ENCODE measurements at regions of chr2 and their contacts with region 1.

Region 1: GRCh38 chr2:38581193-38582147 is 21.3 kb downstream of the HNRNPLL start:
- DNase-seq: peak in 16 of 35 experiments; percentile 6 to 87 (median 28)
- ATAC-seq: peak; percentile 78 to 90 (median 87)
- H3K4me3 ChIP-seq: no peak overlapping the region
- H3K4me3 Mint-ChIP-seq: no peak overlapping the region
- H3K27ac ChIP-seq: no peak overlapping the region
- H3K27ac Mint-ChIP-seq: no peak overlapping the region
- H3K4me1 ChIP-seq: peaks cover 0 to 4% of the 10 kb centered on the region in 2 experiments
- H3K4me1 Mint-ChIP-seq: peaks cover 6 to 39% (median 23%) of the 10 kb centered on the region in 3 donors
- H3K27me3 ChIP-seq: no peaks in the 10 kb centered on the region
- H3K27me3 Mint-ChIP-seq: no peaks in the 10 kb centered on the region

Region 2: GRCh38 chr2:38602732-38603401 is 21.4 kb after region 1 on chr2 and contains the start of gene HNRNPLL:
- CTCF ChIA-PET with region 1: interaction called, 16 to 43 read pairs
- POLR2A ChIA-PET with region 1: interaction called, 3 read pairs
- DNase-seq: peak; percentile 81 to 94 (median 89)
- ATAC-seq: peak; percentile 85 to 89 (median 88)
- H3K4me3 ChIP-seq: peak within 1 kb of the TSS; percentile 85 to 86
- H3K4me3 Mint-ChIP-seq: peak within 1 kb of the TSS; percentile 88 to 94 (median 94)
- H3K27ac ChIP-seq: peak within 1 kb of the TSS; percentile 79
- H3K27ac Mint-ChIP-seq: peak within 1 kb of the TSS; percentile 90 to 92
- H3K4me1 ChIP-seq: peaks cover 19 to 22% of the 10 kb centered on the region in 2 experiments
- H3K4me1 Mint-ChIP-seq: peaks cover 45 to 53% (median 49%) of the 10 kb centered on the region in 3 donors
- H3K27me3 ChIP-seq: no peaks in the 10 kb centered on the region
- H3K27me3 Mint-ChIP-seq: no peaks in the 10 kb centered on the region
- total RNA-seq, gene HNRNPLL: 28.1 to 69.0 (median 35.2) TPM

Region 3: DNA sequence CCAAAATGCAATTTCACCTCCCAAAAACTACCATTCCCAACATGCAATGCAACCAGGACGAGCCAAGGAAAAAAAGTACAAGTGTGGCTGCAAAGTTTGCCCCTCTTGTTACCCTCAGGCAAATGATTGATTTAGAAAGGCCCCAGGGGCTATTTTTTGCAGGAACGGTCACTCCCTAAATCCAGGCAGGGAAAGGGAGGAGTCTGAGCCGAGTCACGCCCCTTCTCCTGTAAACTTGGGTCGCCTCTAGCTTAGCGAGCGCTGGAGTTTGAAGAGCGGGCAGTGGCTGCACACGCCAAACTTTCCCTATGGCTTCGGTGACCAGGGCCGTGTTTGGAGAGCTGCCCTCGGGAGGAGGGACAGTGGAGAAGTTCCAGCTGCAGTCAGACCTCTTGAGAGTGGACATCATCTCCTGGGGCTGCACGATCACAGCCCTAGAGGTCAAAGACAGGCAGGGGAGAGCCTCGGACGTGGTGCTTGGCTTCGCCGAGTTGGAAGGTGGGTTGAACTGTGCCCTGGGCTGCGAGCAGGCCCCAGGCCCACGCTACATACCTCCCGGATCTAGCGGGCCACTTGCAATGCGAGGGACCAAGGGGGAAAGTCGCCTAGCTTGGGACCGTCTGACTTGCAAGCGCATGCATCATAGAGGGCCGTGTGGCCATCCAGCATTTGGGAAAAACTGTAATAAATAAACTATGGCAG is 84.5 kb after region 1 on chr2 and contains the start of gene GALM:
- CTCF ChIA-PET with region 1: interaction called in 1 of 2 experiments, 20 read pairs
- POLR2A ChIA-PET with region 1: interaction called in 1 of 2 experiments, 4 read pairs
- DNase-seq: peak in 28 of 35 experiments; percentile 10 to 69 (median 33)
- ATAC-seq: peak; percentile 35 to 49 (median 46)
- H3K4me3 ChIP-seq: peak within 1 kb of the TSS; percentile 70 to 95
- H3K4me3 Mint-ChIP-seq: peak within 1 kb of the TSS; percentile 85 to 91 (median 90)
- H3K27ac ChIP-seq: peak within 1 kb of the TSS; percentile 79
- H3K27ac Mint-ChIP-seq: peak within 1 kb of the TSS; percentile 97 to 99
- H3K4me1 ChIP-seq: peaks cover 13 to 54% of the 10 kb centered on the region in 2 experiments
- H3K4me1 Mint-ChIP-seq: peaks cover 43 to 68% (median 55%) of the 10 kb centered on the region in 3 donors
- H3K27me3 ChIP-seq: no peaks in the 10 kb centered on the region
- H3K27me3 Mint-ChIP-seq: no peaks in the 10 kb centered on the region
- total RNA-seq, gene GALM: 14.3 to 29.4 (median 17.3) TPM

Region 4: GRCh38 chr2:38709567-38710194 is 128.2 kb after region 1 on chr2:
- CTCF ChIA-PET with region 1: interaction called, 3 to 17 read pairs
- POLR2A ChIA-PET with region 1: interaction called in 1 of 2 experiments, 3 read pairs
- DNase-seq: peak in 24 of 35 experiments; percentile 8 to 78 (median 31)
- ATAC-seq: peak; percentile 67 to 86 (median 72)
- H3K4me3 ChIP-seq: peak overlapping the region in 1 of 2 donors; percentile 32
- H3K4me3 Mint-ChIP-seq: peak overlapping the region; percentile 34 to 62 (median 54)
- H3K27ac ChIP-seq: peak overlapping the region; percentile 78
- H3K27ac Mint-ChIP-seq: peak overlapping the region; percentile 94 to 96
- H3K4me1 ChIP-seq: peaks cover 17 to 47% of the 10 kb centered on the region in 2 experiments
- H3K4me1 Mint-ChIP-seq: peaks cover 53 to 77% (median 62%) of the 10 kb centered on the region in 3 donors
- H3K27me3 ChIP-seq: no peaks in the 10 kb centered on the region
- H3K27me3 Mint-ChIP-seq: no peaks in the 10 kb centered on the region

Region 5: GRCh38 chr2:38734299-38735058 is 153.0 kb after region 1 on chr2:
- CTCF ChIA-PET with region 1: interaction called, 9 to 14 read pairs
- POLR2A ChIA-PET with region 1: interaction called, 8 to 10 read pairs
- DNase-seq: no peak
- ATAC-seq: peak in 2 of 4 experiments; percentile 5 to 30
- H3K4me3 ChIP-seq: no peak overlapping the region
- H3K4me3 Mint-ChIP-seq: no peak overlapping the region
- H3K27ac ChIP-seq: no peak overlapping the region
- H3K27ac Mint-ChIP-seq: peak overlapping the region; percentile 55
- H3K4me1 ChIP-seq: no peaks in the 10 kb centered on the region
- H3K4me1 Mint-ChIP-seq: peaks cover 5 to 14% (median 14%) of the 10 kb centered on the region in 3 donors
- H3K27me3 ChIP-seq: peaks cover 0 to 3% of the 10 kb centered on the region in 2 experiments
- H3K27me3 Mint-ChIP-seq: no peaks in the 10 kb centered on the region

Region 6: DNA sequence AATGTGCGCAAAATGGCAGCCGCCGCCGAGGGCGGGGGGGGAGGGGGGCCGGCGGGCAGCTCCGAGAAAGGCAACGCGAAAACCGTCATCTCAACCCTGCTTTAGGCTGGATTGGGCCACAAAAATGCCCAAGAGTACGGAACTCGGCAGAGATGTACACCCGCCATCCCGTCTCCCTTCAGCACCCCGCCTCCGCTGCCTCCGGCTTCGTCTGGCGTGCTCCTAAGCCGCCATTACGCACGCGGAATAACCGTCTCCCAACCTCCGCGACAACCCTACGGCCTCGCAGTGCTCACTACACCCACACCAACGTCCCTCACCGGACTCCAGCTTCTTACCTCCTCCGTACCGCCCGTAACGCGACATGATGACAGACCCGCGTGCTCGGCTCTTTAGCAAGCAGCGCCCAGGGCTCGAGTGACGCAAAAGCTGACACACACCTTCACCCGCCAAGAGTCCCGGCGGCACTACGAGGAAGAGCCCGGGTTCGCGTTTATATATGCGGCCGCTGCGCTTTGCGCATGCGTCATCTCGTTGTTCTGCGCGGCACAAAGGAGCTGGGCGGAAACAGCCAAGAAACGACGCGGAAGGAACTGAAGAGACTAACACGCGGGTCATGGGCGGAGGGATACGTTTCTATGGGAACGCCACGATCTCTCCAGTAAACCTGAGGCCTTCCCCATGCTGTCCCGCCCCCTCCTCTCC is 169.6 kb after region 1 on chr2 and contains the start of gene SRSF7:
- CTCF ChIA-PET with region 1: interaction called, 6 to 97 read pairs
- POLR2A ChIA-PET with region 1: interaction called, 5 to 23 read pairs
- DNase-seq: peak; percentile 94 to 99 (median 97)
- ATAC-seq: peak; percentile 78 to 87 (median 82)
- H3K4me3 ChIP-seq: peak within 1 kb of the TSS; percentile 89 to 95
- H3K4me3 Mint-ChIP-seq: peak within 1 kb of the TSS; percentile 99 to 100 (median 100)
- H3K27ac ChIP-seq: peak within 1 kb of the TSS; percentile 96
- H3K27ac Mint-ChIP-seq: peak within 1 kb of the TSS; percentile 99 to 100
- H3K4me1 ChIP-seq: peaks cover 36 to 46% of the 10 kb centered on the region in 2 experiments
- H3K4me1 Mint-ChIP-seq: peaks cover 52 to 66% (median 62%) of the 10 kb centered on the region in 3 donors
- H3K27me3 ChIP-seq: no peaks in the 10 kb centered on the region
- H3K27me3 Mint-ChIP-seq: peaks cover 0 to 3% of the 10 kb centered on the region in 2 donors
- total RNA-seq, gene SRSF7: 252 to 649 (median 265) TPM

Region 7: DNA sequence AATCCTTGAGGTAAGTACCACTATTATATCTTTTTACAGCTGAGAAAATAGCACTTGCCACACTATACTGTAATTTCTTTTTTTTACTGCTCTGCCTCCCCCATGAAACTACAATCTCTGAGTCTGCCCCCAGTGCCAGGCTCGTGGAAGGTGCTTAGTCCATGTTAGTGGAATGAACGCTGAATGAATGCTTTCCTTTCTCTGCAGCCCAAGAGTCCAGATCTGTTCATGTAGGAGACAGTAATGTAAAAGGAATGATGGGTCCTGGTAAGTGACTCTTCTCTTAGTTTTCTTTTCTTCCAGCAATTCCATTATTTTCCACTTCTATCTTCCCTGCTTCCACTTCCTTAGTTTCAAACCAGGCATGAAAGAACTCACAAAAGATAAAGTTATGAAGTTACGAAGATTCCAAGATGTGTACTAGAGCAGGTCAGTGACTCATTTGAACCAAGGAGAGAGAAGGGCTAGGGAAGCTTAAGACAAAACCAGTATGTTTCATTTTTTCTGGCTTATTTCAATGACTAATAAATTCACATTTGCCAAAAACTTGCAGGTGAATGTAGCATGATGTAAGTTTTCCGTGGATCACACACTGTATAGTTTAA is 354.2 kb after region 1 on chr2:
- CTCF ChIA-PET with region 1: no interaction called
- POLR2A ChIA-PET with region 1: no interaction called
- DNase-seq: no peak
- ATAC-seq: no peak
- H3K4me3 ChIP-seq: no peak overlapping the region
- H3K4me3 Mint-ChIP-seq: no peak overlapping the region
- H3K27ac ChIP-seq: no peak overlapping the region
- H3K27ac Mint-ChIP-seq: no peak overlapping the region
- H3K4me1 ChIP-seq: no peaks in the 10 kb centered on the region
- H3K4me1 Mint-ChIP-seq: no peaks in the 10 kb centered on the region
- H3K27me3 ChIP-seq: no peaks in the 10 kb centered on the region
- H3K27me3 Mint-ChIP-seq: peaks cover 6 to 7% of the 10 kb centered on the region in 2 donors

Region 8: DNA sequence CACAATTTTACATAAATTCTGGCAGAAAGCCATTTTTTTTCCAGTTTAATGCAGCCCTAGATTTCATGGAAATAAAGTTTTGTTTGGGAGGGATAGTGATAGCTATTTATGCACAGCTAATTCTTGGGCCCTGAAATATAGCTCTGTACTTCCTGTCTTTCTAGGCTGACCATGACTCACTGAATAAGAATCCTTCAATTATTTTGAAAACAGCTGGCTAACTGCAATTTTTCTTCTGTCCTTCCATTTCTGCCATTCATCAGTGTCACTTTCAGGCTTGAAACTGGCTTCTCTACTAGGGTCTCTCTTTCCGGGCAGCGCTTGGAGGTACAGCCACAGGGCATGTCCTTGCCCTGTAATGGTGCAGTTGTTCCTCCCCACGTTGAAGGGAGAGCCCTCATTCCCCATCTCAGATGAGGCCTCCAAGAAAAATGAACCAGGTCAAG is 987.1 kb after region 1 on chr2:
- CTCF ChIA-PET with region 1: no interaction called
- POLR2A ChIA-PET with region 1: no interaction called
- DNase-seq: no peak
- ATAC-seq: no peak
- H3K4me3 ChIP-seq: no peak overlapping the region
- H3K4me3 Mint-ChIP-seq: no peak overlapping the region
- H3K27ac ChIP-seq: no peak overlapping the region
- H3K27ac Mint-ChIP-seq: no peak overlapping the region
- H3K4me1 ChIP-seq: no peaks in the 10 kb centered on the region
- H3K4me1 Mint-ChIP-seq: no peaks in the 10 kb centered on the region
- H3K27me3 ChIP-seq: peaks cover 0 to 7% of the 10 kb centered on the region in 2 experiments
- H3K27me3 Mint-ChIP-seq: peaks cover 0 to 2% of the 10 kb centered on the region in 2 donors